WTC11 (cell line): ENCODE measurements at regions of chr22 and their contacts with region 1.

Region 1: GRCh38 chr22:30289134-30289979 is at the start of gene CASTOR1:
- DNase-seq: peak; percentile 99
- ATAC-seq: peak; percentile 87
- H3K4me3 Mint-ChIP-seq: peak within 1 kb of the TSS; percentile 80
- H3K27ac Mint-ChIP-seq: peak within 1 kb of the TSS; percentile 93
- H3K4me1 Mint-ChIP-seq: peaks cover 11% of the 10 kb centered on the region
- H3K27me3 Mint-ChIP-seq: peaks cover 3% of the 10 kb centered on the region
- CTCF ChIP-seq: no peak
- total RNA-seq, gene CASTOR1: 15.8 to 18.6 TPM (median 16.0 TPM) in 3 replicates

Region 2: GRCh38 chr22:30235687-30236170 is 53.6 kb before region 1 on chr22:
- CTCF ChIA-PET with region 1: interaction called, 15 read pairs
- POLR2A ChIA-PET with region 1: no interaction called
- DNase-seq: no peak
- ATAC-seq: peak; percentile 23
- H3K4me3 Mint-ChIP-seq: no peak overlapping the region
- H3K27ac Mint-ChIP-seq: no peak overlapping the region
- H3K4me1 Mint-ChIP-seq: peaks cover 53% of the 10 kb centered on the region
- H3K27me3 Mint-ChIP-seq: no peaks in the 10 kb centered on the region; the same call in 1 of the 2 replicates
- CTCF ChIP-seq: no peak

Region 3: GRCh38 chr22:30270832-30271231 is 18.5 kb before region 1 on chr22:
- CTCF ChIA-PET with region 1: interaction called, 19 read pairs
- POLR2A ChIA-PET with region 1: no interaction called
- DNase-seq: no peak
- ATAC-seq: no peak
- H3K4me3 Mint-ChIP-seq: no peak overlapping the region
- H3K27ac Mint-ChIP-seq: no peak overlapping the region
- H3K4me1 Mint-ChIP-seq: 0 out of 2 replicates have a peak, but pooled peaks cover 1% of the 10 kb centered on the region
- H3K27me3 Mint-ChIP-seq: no peaks in the 10 kb centered on the region; the same call in 1 of the 2 replicates
- CTCF ChIP-seq: no peak

Region 4: GRCh38 chr22:30310881-30311771 is 21.8 kb after region 1 on chr22:
- CTCF ChIA-PET with region 1: interaction called, 36 read pairs
- POLR2A ChIA-PET with region 1: no interaction called
- DNase-seq: no peak
- ATAC-seq: no peak; the same call in 1 of the 2 replicates
- H3K4me3 Mint-ChIP-seq: no peak overlapping the region
- H3K27ac Mint-ChIP-seq: no peak overlapping the region
- H3K4me1 Mint-ChIP-seq: peaks cover 10% of the 10 kb centered on the region
- H3K27me3 Mint-ChIP-seq: no peaks in the 10 kb centered on the region
- CTCF ChIP-seq: no peak

Region 5: GRCh38 chr22:30373331-30374325 is 84.3 kb after region 1 on chr22:
- CTCF ChIA-PET with region 1: interaction called, 11 read pairs
- POLR2A ChIA-PET with region 1: interaction called, 3 read pairs
- DNase-seq: no peak
- ATAC-seq: no peak
- H3K4me3 Mint-ChIP-seq: no peak overlapping the region
- H3K27ac Mint-ChIP-seq: no peak overlapping the region
- H3K4me1 Mint-ChIP-seq: 0 out of 2 replicates have a peak, but pooled peaks cover 3% of the 10 kb centered on the region
- H3K27me3 Mint-ChIP-seq: no peaks in the 10 kb centered on the region
- CTCF ChIP-seq: no peak

Region 6: DNA sequence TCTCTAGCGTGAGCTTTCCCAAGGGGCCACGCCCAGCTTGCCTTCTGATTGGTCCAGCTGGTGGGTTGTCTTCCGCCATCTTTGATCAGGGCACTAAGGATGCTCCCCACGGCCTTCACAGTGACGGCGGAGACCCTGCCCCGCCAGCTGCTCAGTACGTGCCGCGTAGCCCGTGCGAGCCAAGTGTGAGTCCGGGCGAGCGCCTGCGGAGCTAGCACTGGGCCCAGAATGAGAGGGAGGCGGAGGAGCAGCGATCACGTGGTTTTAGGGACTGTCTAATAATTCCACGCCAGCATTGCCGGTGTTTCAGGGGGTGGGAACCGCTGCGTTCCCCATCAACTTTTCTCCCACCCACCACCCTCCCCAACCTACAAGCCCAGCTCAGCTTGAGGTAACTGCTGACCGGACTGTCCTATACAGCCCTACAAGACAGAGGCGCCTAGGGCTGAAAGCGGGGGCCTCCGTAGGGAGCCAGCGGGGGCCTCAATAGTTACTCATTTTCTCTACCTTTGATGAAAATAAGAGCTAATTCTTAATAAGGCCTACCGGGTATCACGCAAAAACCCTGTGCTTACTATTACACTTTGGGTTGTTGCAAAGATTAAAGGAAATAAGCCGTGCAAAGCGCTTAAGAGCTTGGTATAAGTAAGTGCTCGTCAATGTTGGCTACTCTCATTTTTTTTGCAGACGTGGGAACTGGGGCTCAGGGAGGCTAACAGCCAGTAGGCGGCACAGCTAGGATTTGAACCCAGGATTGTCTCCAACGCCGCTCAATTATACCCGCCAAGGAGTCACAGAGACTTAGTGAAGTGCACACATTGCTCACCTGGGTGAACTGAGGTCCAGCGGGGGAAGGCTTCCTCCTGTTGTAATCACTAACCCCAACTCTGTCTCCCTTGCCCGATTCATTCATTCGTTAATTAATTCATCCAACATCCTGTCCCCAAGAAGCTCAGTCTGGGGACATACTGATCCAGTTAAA is 134.9 kb after region 1 on chr22:
- CTCF ChIA-PET with region 1: interaction called, 59 read pairs
- POLR2A ChIA-PET with region 1: interaction called, 7 read pairs
- DNase-seq: peak; percentile 98
- ATAC-seq: peak; percentile 78
- H3K4me3 Mint-ChIP-seq: peak overlapping the region; percentile 83
- H3K27ac Mint-ChIP-seq: peak overlapping the region; percentile 99
- H3K4me1 Mint-ChIP-seq: peaks cover 32% of the 10 kb centered on the region
- H3K27me3 Mint-ChIP-seq: no peaks in the 10 kb centered on the region; the same call in 1 of the 2 replicates
- CTCF ChIP-seq: no peak

Region 7: DNA sequence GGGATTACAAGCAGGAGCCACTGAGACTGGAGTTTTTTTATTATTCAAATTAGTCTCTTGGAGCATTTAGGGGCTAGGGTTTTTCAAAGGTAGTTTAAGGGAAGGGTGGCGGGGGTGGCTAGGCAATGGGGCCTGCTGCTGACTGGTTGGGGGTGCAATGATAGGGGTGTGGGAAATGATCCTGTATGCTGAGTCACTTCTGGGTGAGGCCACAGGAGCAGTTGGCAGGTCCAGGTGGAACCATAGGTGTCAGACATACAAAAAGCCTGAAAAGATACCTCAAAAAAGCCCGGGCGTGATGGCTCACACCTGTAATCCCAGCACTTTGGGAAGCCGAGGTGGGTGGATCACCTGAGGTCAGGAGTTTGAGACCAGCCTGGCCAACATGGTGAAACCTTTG is 149.9 kb after region 1 on chr22:
- CTCF ChIA-PET with region 1: no interaction called
- POLR2A ChIA-PET with region 1: no interaction called
- DNase-seq: no peak
- ATAC-seq: no peak
- H3K4me3 Mint-ChIP-seq: no peak overlapping the region
- H3K27ac Mint-ChIP-seq: no peak overlapping the region
- H3K4me1 Mint-ChIP-seq: peaks cover 12% of the 10 kb centered on the region
- H3K27me3 Mint-ChIP-seq: peaks cover 21% of the 10 kb centered on the region
- CTCF ChIP-seq: no peak